PC-9 (cell line): ENCODE measurements at regions of chr9 and their contacts with region 1.

Region 1: DNA sequence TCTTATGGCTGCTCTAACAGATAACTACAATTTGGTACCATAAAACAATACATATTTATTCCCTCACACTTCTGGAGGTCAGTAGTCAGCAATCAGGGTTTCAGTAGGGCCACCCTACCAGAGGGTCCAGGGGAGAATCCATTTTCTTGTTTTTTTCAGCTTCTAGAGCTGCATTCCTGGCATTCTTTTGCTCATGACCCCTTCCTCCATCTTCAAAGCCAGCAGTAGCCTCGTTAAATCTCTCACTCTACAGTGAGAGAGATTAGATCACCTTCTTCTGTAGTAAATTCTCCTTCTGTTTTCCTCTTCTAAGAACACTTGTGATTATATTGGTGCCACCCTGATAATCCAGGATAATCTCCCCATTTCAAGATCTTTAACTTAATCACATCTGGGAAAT is 187.4 kb downstream of the RFK start:
- DNase-seq: no peak
- H3K4me3 ChIP-seq: no peak overlapping the region
- H3K27ac ChIP-seq: no peak overlapping the region
- H3K4me1 ChIP-seq: peaks cover 17% of the 10 kb centered on the region
- H3K27me3 ChIP-seq: no peaks in the 10 kb centered on the region
- CTCF ChIP-seq: no peak

Region 2: DNA sequence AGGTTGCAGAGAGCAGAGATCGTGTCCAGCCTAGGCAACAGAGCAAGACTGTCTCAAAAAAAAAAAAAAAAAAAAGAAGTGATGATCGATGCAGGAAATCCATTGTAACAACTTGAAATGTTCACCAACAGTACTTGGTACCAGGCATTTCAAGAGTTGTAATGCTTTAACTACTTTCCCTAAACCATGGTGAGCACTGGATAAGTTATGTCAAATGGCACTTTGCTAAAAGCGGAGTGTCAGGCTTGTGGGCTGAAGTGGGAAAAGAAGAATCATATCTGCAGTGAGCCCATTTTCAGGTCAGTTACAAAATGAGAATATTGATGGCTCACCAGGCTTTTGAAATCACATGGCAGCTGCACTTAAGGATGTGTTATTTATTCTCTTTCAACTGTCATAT is 14.8 kb before region 1 on chr9:
- CTCF ChIA-PET with region 1: no interaction called
- POLR2A ChIA-PET with region 1: no interaction called
- intact Hi-C with region 1: loop called (anchors 2 kb)
- DNase-seq: no peak
- H3K4me3 ChIP-seq: no peak overlapping the region
- H3K27ac ChIP-seq: no peak overlapping the region
- H3K4me1 ChIP-seq: no peaks in the 10 kb centered on the region
- H3K27me3 ChIP-seq: no peaks in the 10 kb centered on the region
- CTCF ChIP-seq: no peak

Region 3: DNA sequence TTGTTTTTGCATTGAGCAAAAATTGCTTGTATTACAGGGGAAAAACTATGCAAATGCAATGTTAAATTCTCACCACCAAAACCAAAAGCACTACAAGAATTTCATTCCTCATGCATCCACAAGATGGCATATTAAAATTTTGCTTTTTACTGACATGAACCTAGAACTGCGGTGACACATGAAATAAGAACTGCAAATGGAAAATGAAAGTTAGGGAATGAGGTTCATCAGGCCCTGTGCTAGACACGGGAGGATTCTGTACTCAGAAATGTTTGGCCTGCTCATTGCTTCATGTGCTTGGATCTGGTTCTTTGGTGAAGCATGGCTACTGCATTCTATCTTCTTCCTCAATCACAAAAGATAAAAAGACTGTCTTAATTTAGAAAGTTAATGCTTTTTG is 196.5 kb after region 1 on chr9:
- CTCF ChIA-PET with region 1: no interaction called
- POLR2A ChIA-PET with region 1: interaction called, 18 read pairs
- intact Hi-C with region 1: no loop called
- DNase-seq: peak in 1 of 2 experiments; percentile 68
- H3K4me3 ChIP-seq: 0 out of 2 replicates have a peak overlapping the region, but pooled peaks have one; percentile 15
- H3K27ac ChIP-seq: no peak overlapping the region
- H3K4me1 ChIP-seq: peaks cover 37% of the 10 kb centered on the region
- H3K27me3 ChIP-seq: no peaks in the 10 kb centered on the region
- CTCF ChIP-seq: peak; percentile 58; the same call in 1 of the 2 replicates